ENCODE measurements at regions of chr6 and their contacts with region 1.

Region 1: GRCh38 chr6:16332175-16332542 is 93.8 kb downstream of the GMPR start:
- DNase-seq: no peak
- H3K4me3 ChIP-seq: no peak overlapping the region
- CTCF ChIP-seq: peak; percentile 73

Region 2: GRCh38 chr6:16108921-16109658 is 223.1 kb before region 1 on chr6:
- CTCF ChIA-PET with region 1: no interaction called
- POLR2A ChIA-PET with region 1: no interaction called
- DNase-seq: no peak
- H3K4me3 ChIP-seq: no peak overlapping the region
- CTCF ChIP-seq: no peak

Region 3: DNA sequence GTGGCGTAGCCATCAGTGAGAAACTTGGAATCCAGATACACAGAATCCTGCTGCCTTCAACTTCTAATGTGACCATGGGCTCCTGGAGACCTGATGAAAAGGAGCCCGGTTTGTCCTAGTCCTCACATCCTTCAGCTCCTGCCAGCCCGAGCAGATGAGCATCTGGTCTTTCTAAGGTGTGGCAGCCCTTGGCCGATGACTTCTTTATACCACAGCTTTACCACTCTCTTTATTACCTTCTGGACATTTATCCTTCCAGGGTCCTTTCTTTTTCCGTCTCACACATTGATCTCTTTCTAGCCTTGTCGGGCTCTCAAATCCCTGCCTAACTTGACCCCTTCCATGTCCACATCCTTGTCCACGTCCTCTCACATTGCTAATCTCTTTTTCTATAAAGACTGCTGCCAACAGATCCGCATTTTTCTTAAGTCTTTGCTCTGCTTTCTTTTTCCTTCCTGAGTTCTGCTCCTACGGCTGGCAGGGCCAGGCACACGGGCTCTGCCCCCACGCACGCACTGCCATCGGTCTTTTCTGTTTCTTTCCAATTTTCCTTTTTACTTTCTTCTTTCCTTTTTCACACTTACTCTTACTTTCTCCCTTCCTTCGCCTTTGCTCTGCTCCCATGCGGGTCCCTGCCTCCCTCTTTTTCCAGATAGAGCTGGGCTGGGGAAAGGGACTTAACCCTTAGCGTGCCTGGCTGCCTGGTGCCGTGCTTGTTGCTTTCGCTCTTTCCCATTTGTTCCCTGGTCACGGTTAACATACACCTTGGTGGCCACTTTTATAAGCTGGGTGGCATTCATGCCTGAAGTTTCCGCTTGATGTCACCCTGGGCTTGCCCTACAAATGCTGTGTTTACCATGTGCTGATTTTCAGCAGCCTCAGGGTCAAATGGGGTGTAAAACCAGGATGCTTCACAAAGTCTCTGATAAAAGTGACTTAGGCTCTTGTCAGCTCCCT is 103.2 kb before region 1 on chr6:
- CTCF ChIA-PET with region 1: interaction called, 16 read pairs
- POLR2A ChIA-PET with region 1: no interaction called
- DNase-seq: no peak
- H3K4me3 ChIP-seq: no peak overlapping the region
- CTCF ChIP-seq: no peak

Region 4: DNA sequence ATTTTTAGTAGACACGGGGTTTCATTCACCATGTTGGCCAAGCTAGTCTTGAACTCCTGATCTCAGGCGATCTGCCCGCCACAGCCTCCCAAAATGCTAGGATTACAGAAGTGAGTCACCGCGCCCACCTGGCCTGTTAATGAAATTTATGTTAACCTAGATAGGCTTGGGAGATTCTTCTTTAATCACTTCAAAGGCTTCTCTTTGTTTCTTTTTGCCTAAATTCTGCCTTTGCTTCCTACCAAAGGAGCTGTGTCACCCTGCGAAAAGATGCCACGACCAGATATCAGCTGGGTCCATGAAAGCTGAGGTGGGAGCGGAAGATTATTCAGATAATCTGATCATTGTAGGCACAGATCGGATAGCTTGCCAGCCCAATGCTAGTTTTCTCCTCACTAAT is 18.4 kb before region 1 on chr6:
- CTCF ChIA-PET with region 1: interaction called, 163 read pairs
- POLR2A ChIA-PET with region 1: no interaction called
- DNase-seq: no peak
- H3K4me3 ChIP-seq: no peak overlapping the region
- CTCF ChIP-seq: no peak

Region 5: DNA sequence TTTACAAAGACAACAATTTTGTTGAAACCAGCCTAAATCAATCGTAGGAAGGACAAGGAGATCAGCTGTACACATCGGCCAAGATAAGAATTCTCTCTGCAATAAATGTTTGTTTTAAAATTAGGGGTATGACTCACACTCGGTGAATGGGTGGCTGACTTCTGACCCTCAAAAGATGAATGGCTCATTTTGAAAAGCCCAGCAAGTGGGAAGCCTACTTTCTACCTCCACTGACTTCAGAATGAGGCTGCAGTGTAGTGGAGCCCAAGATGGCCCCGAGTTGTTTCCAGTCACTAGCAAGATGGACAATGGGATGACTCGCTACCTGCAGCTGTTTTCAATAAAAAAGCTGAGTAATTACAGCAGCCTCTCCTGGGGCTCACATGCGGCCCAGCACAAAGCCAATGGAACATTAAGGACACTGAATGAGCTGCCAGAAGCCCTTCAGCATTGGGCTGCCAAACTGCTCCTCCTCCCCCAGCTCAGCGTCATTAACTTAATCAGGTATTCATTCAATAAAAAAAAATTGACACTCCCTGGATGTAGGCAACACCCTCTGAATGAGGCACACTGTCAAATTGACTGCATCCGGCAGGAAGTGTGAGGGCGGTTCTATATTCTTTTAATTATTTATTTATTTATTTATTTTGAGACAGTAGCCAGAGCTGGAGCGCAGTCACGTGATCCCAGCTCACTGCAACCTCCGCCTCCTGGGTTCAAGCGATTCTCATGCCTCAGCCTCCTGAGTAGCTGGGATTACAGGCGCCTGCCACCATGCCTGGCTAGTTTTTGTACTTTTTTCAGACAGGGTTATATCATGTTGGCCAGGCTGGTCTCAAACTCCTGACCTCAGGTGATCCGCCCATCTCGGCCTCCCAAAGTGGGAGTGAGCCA is 13.5 kb after region 1 on chr6:
- CTCF ChIA-PET with region 1: interaction called, 19 read pairs
- POLR2A ChIA-PET with region 1: interaction called, 3 read pairs
- DNase-seq: no peak
- H3K4me3 ChIP-seq: no peak overlapping the region
- CTCF ChIP-seq: no peak

Region 6: GRCh38 chr6:16396497-16397319 is 64.5 kb after region 1 on chr6:
- CTCF ChIA-PET with region 1: interaction called, 13 read pairs
- POLR2A ChIA-PET with region 1: no interaction called
- DNase-seq: no peak
- H3K4me3 ChIP-seq: no peak overlapping the region
- CTCF ChIP-seq: no peak

Region 7: GRCh38 chr6:16409531-16410441 is 77.6 kb after region 1 on chr6:
- CTCF ChIA-PET with region 1: interaction called, 65 read pairs
- POLR2A ChIA-PET with region 1: no interaction called
- DNase-seq: no peak
- H3K4me3 ChIP-seq: no peak overlapping the region
- CTCF ChIP-seq: peak; percentile 90

Region 8: DNA sequence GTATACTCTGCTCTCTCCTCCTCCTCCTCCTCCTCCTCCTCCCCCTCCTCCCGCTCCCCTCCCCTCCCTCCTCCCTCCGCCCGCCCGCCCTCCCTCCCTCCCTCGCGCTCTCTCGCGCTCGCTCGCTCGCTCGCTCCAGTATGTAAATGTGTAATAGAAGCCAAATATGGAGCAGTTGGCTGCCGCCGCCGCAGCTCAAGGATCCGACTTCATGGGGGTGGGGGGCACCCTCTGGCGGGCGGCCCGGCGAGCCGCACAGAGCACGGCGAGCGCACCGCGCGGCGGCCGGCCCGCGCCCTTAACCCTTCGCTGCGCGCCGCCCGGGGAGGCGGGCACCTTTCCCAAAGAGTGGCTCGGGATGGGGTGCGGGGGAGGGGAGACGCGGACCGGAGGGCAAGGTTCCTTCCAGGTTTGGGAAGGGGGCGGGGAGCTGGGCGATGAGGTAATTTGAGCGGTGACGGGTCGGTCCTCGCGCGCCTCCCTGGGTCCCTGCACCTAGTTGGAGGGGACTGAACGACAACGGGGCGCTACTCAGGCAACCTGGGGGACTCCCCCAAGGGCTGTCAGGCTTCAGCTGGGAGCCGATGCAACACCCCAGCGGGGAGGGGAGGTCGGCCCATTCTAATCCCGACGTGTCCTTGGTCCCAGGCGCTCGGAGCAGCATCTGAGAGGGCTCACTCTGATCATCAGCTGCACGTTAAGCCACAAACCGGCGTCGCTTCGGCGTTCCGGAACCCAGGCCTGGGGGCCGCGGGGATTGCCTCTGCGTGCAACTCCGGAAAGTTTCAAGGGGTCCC is 429.5 kb after region 1 on chr6:
- CTCF ChIA-PET with region 1: interaction called, 26 read pairs
- POLR2A ChIA-PET with region 1: no interaction called
- DNase-seq: no peak
- H3K4me3 ChIP-seq: peak overlapping the region; percentile 77
- CTCF ChIP-seq: peak; percentile 36

Measured in AG04449 (cell line).